Heart right ventricle (tissue), 16 donors: ENCODE measurements at regions of chr12 and their contacts with region 1.

Region 1: DNA sequence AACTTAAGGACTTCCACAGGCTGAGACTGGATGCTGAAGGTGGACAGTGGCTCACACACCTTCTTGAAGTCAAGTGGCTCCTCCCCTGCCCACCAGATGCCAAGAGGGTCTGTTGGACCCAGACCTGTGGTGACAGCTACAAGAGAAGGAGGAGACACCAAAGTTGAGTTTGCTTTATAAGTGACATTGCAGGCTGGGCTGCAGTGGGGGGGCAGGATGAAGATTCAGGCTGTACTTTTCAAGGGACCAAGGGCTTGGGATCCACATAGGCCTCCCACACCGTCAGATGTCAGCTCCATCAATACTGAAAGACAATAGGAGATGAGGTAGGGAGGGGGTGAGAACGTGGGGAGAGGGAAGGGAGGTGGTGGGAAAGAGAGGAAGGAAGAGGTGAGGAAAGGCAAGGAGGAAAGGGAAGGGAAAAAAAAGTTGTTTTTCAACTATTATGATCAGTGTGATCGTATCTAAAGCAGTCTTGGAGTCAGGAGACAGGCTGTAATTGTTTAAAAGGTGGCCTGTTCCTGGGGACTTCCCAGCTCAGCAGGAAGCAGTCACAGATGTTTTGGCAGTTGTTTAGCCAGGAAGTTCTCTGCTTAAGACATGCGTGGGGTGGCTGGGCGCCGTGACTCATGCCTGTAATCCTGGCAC is 84.1 kb upstream of the RESF1 start:
- DNase-seq: peak; percentile 41 to 69
- ATAC-seq: peak; percentile 84 to 96 (median 92)
- H3K4me3 ChIP-seq: no peak overlapping the region
- H3K27ac ChIP-seq: peak overlapping the region; percentile 32 to 88 (median 74)
- H3K4me1 ChIP-seq: peaks cover 0 to 36% (median 17%) of the 10 kb centered on the region in 9 donors
- H3K27me3 ChIP-seq: no peaks in the 10 kb centered on the region
- CTCF ChIP-seq: no peak

Region 2: GRCh38 chr12:31804185-31804504 is 70.9 kb before region 1 on chr12:
- intact Hi-C with region 1: no loop called
- DNase-seq: no peak
- ATAC-seq: no peak
- H3K4me3 ChIP-seq: no peak overlapping the region
- H3K27ac ChIP-seq: no peak overlapping the region
- H3K4me1 ChIP-seq: peaks cover 0 to 4% (median 0%) of the 10 kb centered on the region in 9 donors
- H3K27me3 ChIP-seq: no peaks in the 10 kb centered on the region
- CTCF ChIP-seq: no peak

Region 3: GRCh38 chr12:31819427-31819826 is 55.7 kb before region 1 on chr12:
- intact Hi-C with region 1: loop called in 1 of 10 experiments (anchors 5 kb)
- DNase-seq: no peak
- ATAC-seq: peak in 6 of 8 donors; percentile 65 to 79 (median 72)
- H3K4me3 ChIP-seq: no peak overlapping the region
- H3K27ac ChIP-seq: peak overlapping the region in 5 of 10 donors; percentile 22 to 67 (median 30)
- H3K4me1 ChIP-seq: peaks cover 0 to 5% (median 0%) of the 10 kb centered on the region in 9 donors
- H3K27me3 ChIP-seq: no peaks in the 10 kb centered on the region
- CTCF ChIP-seq: no peak

Region 4: DNA sequence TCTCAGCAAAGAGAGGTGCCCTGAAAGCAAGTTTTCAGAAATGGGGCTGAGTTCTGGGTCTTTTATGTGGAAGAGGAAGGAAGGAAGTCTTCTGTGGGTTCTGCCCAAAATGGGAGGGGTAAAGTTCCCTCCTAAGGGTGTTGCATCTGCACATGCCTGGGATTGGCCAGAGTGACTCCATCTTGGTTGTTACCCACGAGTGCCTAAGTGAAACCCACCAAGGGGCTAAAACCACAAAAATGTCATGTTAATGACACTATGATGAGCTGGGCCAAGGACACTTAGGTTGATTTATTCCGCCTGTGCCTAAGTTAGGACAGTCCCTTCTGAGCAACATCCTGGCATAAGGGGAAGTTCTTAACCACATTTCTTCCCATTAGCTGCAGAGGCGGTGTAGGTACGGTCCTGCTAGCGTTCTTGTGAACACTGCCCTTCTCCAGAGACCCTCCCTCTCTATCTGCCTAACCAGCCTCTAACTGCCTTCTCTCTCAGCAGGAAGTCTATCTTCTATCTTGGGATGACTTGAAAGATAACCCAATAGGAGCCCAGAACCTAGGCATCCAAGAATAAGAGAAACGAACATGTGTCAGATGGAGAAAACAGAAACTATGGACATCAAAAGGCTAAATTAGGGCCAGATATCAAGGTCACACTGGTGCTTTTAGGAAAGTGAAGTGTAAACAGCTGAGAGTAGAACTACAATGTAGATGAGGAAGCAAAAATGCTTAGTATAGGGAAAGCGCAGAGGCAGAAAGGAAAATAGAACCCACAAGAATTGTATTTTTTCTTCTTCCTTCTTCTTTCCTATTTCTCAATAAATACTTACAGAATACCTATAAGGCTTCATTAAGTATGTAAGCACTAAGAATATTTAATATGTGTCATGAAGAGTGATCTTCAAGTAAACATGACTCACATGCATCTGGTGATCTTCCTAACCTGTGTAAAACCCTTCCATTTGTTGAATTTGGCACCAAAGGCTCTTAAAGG is 42.0 kb before region 1 on chr12:
- intact Hi-C with region 1: no loop called
- DNase-seq: no peak
- ATAC-seq: peak in 6 of 8 donors; percentile 51 to 79 (median 64)
- H3K4me3 ChIP-seq: no peak overlapping the region
- H3K27ac ChIP-seq: peak overlapping the region in 2 of 10 donors; percentile 40 to 75
- H3K4me1 ChIP-seq: peaks cover 0 to 42% (median 0%) of the 10 kb centered on the region in 9 donors
- H3K27me3 ChIP-seq: no peaks in the 10 kb centered on the region
- CTCF ChIP-seq: no peak

Region 5: DNA sequence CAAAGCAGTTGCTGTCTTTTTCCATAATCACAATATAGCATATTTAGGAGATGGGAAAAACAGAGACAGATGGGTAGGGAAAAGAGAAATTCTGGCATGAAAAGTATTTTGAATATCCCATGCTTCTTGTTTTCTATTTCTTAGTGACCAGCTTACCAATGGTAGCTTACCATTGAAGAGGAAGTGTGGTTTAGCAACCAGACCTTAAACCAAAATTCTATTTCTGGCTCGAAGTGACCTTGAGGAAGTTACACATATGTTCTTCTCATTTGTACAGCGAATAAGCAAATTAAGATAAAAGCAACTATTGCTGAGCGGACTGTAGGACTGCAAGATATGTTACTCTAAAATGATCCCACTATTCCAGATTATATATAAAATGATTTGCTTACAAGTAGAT is 607.1 kb after region 1 on chr12:
- intact Hi-C with region 1: no loop called
- DNase-seq: peak in 1 of 2 donors; percentile 13
- ATAC-seq: peak; percentile 37 to 82 (median 70)
- H3K4me3 ChIP-seq: peak overlapping the region in 3 of 10 donors; percentile 2 to 18 (median 5)
- H3K27ac ChIP-seq: peak overlapping the region in 9 of 10 donors; percentile 21 to 85 (median 64)
- H3K4me1 ChIP-seq: peaks cover 0 to 54% (median 37%) of the 10 kb centered on the region in 9 donors
- H3K27me3 ChIP-seq: no peaks in the 10 kb centered on the region
- CTCF ChIP-seq: no peak